ENCODE measurements at regions of chr3 and their contacts with region 1.

Region 1: GRCh38 chr3:49673715-49674496 is at the start of gene APEH:
- DNase-seq: peak; percentile 91 to 98
- H3K4me3 ChIP-seq: peak within 1 kb of the TSS; percentile 78
- H3K27ac ChIP-seq: peak within 1 kb of the TSS; percentile 93 to 95
- H3K4me1 ChIP-seq: peaks cover 0 to 17% of the 10 kb centered on the region in 2 donors
- H3K27me3 ChIP-seq: no peaks in the 10 kb centered on the region
- CTCF ChIP-seq: no peak
- total RNA-seq, gene APEH: 79.5 TPM

Region 2: DNA sequence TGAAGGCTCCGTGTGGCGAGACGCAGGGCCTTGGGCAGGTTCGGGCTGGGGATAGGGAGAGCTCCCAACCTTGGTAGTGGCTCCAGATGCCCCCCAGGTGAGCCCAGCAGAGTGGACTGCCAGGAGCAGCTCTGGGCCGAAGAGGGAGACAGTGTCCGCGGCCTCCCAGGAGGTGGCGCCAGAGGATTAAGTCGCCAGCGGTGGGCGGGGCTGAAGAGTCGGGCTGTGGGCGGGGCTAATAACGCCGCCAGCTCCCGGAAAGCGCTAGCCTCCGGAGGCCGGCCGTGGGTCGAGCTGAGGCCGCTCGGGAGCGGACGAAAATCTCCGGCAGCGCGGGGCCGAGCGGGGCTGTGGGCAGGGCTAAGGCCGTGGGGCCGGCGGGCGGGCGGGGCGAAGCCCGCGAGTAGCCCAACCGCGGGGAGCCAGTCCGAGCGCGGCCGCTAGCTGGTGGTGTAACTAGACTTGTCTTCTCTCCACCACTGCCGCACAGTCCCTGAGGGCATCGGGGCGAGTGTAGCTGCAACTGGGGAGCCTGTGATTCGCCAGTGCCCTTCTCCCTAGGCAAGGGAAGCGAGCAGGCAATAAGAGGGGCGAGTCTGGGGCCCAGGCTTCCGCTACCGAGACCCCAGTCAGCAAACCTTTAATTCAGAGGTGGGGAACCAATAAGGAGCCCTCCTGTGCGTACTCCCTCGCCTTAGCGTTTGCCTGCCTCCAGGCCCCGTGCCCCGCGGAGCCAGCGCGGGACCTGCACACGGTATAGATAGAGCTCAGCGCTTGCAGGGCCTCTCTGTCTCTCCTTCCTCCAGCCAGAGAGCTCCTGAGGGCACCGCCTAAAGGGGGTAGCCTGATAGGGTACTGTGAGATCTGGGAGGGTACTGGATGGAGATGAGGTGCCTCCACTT is 134.0 kb before region 1 on chr3:
- intact Hi-C with region 1: loop called (anchors 1 kb)
- DNase-seq: peak; percentile 67 to 95
- H3K4me3 ChIP-seq: peak overlapping the region; percentile 37 to 66
- H3K27ac ChIP-seq: peak overlapping the region; percentile 67 to 87
- H3K4me1 ChIP-seq: no peaks in the 10 kb centered on the region
- H3K27me3 ChIP-seq: no peaks in the 10 kb centered on the region
- CTCF ChIP-seq: peak; percentile 88 to 94 (median 94)

Region 3: GRCh38 chr3:49553692-49554632 is 119.9 kb before region 1 on chr3 and contains the start of gene BSN:
- intact Hi-C with region 1: loop called (anchors 1 kb)
- DNase-seq: peak; percentile 46 to 94
- H3K4me3 ChIP-seq: peak within 1 kb of the TSS; percentile 70 to 75
- H3K27ac ChIP-seq: peak within 1 kb of the TSS; percentile 71 to 72
- H3K4me1 ChIP-seq: peaks cover 3 to 13% of the 10 kb centered on the region in 2 donors
- H3K27me3 ChIP-seq: no peaks in the 10 kb centered on the region
- CTCF ChIP-seq: no peak
- total RNA-seq, gene BSN: 0.85 TPM

Region 4: GRCh38 chr3:49723628-49724551 is 50.0 kb after region 1 on chr3 and contains the start of gene GMPPB:
- intact Hi-C with region 1: loop called (anchors 1 kb)
- DNase-seq: peak; percentile 92 to 97
- H3K4me3 ChIP-seq: peak within 1 kb of the TSS; percentile 86 to 98
- H3K27ac ChIP-seq: peak within 1 kb of the TSS; percentile 93 to 97
- H3K4me1 ChIP-seq: peaks cover 16 to 20% of the 10 kb centered on the region in 2 donors
- H3K27me3 ChIP-seq: no peaks in the 10 kb centered on the region
- CTCF ChIP-seq: no peak
- total RNA-seq, gene GMPPB: 16.4 TPM

Measured in ascending aorta (tissue), 2 donors.